ENCODE measurements at regions of chr7 and their contacts with region 1.

Region 1: DNA sequence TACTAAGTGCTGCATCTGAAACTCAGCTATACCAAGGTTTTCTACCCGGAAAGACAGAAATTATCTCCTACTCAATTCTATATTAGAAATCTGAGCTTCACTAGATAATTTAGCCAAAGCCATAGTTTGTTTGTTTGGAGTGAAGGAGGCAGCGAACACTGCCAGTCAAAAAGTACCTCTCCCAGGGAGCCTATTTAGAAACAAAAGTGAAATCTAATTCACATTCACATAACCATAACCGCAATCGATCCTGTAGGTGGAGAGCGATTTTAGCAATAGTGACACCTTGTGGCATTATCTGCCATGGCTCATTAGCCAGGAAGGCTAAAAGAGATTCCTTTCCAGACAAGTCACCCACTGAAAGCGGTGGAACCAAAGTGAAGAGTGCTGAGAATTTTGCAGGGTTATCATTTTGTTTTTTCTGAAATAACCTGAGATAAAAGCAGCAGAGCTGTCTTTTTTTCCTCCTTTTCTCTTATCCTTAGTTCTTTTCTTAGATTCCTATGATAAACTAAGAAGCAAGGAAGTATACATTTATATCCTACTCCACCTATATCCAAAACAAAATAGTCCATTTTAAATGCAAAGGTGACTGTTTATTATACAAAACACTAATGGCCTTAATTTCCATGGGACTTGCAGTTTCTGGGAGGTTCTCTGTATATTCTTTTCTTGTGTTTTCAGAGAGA is 83.7 kb upstream of the BET1 start:
- DNase-seq: peak; percentile 41
- H3K4me3 Mint-ChIP-seq: peak overlapping the region; percentile 48
- H3K27ac Mint-ChIP-seq: no peak overlapping the region
- H3K4me1 Mint-ChIP-seq: peaks cover 7% of the 10 kb centered on the region
- H3K27me3 Mint-ChIP-seq: peaks cover 26% of the 10 kb centered on the region

Region 2: DNA sequence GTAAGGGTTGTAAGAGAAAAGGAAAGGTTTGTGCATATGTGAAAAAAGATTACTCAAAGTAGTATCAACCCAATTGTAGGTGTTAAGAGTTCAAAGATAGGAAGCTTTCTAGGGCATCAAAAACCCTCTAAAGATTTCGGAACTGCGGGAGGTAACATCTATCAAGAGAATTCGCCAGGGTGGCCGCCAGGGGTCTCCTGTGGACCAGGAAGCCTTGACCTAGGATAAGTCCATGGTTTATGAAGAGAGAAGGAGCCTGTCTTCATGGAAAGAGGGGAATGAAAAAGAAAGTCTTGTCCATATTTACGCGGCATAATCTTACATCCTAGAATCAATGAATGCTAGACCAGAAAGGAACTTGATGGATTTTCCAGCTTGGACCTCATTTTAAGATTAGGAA is 372.6 kb before region 1 on chr7:
- intact Hi-C with region 1: loop called (anchors 1 kb)
- DNase-seq: no peak
- H3K4me3 Mint-ChIP-seq: no peak overlapping the region
- H3K27ac Mint-ChIP-seq: no peak overlapping the region
- H3K4me1 Mint-ChIP-seq: no peaks in the 10 kb centered on the region
- H3K27me3 Mint-ChIP-seq: peaks cover 5% of the 10 kb centered on the region

Region 3: GRCh38 chr7:93799750-93800357 is 288.0 kb before region 1 on chr7:
- intact Hi-C with region 1: loop called (anchors 5 kb)
- DNase-seq: no peak
- H3K4me3 Mint-ChIP-seq: no peak overlapping the region
- H3K27ac Mint-ChIP-seq: no peak overlapping the region
- H3K4me1 Mint-ChIP-seq: no peaks in the 10 kb centered on the region
- H3K27me3 Mint-ChIP-seq: peaks cover 2% of the 10 kb centered on the region

Region 4: DNA sequence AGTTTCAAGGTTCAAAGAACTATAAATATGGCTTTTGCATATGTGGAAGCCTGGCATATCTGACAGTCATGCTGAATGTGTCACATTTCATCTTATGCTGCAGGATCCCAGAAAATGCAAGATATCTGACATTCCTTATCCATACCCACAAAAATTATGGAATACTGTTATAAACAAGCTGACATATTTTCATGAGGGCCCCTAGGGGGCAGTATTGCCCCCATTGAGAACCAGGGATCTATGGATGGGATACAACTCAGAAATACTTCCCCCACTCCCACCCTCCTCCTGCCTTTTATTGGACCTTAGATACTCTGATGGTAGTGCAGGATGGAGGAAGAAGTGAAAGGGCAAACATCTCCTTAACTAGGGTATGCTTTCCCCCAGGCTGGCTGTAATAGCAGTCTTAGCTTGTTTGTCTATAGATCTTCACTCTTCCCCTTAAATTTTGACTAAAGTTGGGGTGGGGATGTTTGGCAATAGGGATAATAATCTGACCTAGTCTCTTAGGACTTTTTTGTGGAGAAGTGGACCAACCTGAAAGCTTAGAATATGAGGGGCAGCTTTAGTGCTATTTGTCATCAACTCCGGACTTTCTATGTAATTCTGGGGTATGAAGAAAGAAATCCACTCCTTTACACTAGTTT is 184.9 kb before region 1 on chr7:
- intact Hi-C with region 1: loop called (anchors 1 kb)
- DNase-seq: no peak
- H3K4me3 Mint-ChIP-seq: no peak overlapping the region
- H3K27ac Mint-ChIP-seq: no peak overlapping the region
- H3K4me1 Mint-ChIP-seq: no peaks in the 10 kb centered on the region
- H3K27me3 Mint-ChIP-seq: peaks cover 9% of the 10 kb centered on the region

Region 5: DNA sequence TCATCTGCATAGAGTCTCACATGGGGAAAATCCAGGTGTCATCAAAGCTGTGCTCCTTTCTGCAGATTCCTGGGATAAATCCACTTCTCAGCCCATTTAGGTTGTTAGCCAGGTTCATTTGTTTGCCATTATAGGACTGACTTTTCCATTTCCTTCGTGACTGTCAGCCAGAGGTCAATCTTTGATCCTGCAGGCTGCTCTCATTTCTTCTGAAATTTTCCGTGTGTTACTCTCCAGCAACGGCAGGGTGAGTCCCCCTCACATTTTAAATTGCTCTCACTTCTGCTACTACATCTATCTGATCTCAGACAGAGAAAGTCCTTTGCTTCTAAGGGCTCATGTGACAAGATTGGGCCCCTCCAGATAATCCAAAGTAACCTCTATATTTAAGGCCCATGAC is 67.0 kb after region 1 on chr7:
- intact Hi-C with region 1: no loop called
- DNase-seq: no peak
- H3K4me3 Mint-ChIP-seq: no peak overlapping the region
- H3K27ac Mint-ChIP-seq: no peak overlapping the region
- H3K4me1 Mint-ChIP-seq: peaks cover 7% of the 10 kb centered on the region
- H3K27me3 Mint-ChIP-seq: peaks cover 9% of the 10 kb centered on the region

Measured in activated T-helper 1 cell treated with anti-CD3 and anti-CD28 coated beads, Interleukin-12 subunit alpha, Interleukin-12 subunit beta, Interleukin-2, Interleukin-4 antibody, amounts not matched to agents 30 ng/mL and 10 ng/mL and 1 ng/mL, durations not matched to agents 14 hours and 24 hours and 36 hours (primary cell).